ENCODE measurements at regions of chr7 and their contacts with region 1.

Region 1: DNA sequence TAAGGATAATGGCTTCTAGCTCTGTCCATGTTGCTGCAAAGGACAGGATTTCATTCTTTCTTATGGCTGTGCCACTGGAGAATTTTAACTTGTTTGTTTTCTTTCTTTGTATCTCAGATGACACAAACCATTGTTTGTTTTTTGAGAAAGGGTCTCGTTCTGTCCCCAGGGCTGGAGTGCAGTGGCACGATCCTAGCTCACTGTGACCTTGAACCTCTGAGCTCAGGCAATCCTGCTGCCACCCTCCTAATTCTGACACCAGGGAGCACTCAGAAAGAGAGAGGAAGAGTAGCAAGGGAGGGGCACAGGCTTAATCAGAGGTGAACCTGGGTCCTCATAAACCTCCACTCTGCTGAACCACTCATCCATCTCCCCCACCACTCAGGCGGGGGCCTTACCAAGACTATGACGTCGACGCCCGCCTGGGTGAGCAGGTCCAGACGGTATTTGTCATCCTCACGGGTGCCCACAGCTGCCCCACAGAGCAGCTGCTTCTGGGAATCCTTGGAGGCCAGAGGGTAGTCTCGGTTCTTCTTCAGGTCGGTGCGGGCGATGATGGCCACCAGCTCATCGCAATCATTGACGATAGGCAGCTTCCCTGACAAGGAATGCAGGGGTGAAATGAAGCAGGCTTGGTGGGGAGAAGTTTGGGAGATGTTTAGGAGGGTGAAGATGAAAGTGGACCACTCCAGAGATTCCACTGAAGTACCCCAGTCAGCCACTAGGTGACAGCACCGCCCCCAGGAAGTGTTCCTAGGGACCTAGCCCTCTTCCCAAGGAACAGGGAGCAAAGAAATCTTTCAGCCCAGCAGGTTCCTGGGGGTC is 11.6 kb downstream of the IMPDH1 start:
- DNase-seq: peak in 8 of 10 donors; percentile 62 to 75 (median 70)
- H3K4me3 ChIP-seq: no peak overlapping the region
- H3K27ac ChIP-seq: no peak overlapping the region
- H3K27me3 ChIP-seq: no peaks in the 10 kb centered on the region
- CTCF ChIP-seq: peak; percentile 65 to 97 (median 92)

Region 2: DNA sequence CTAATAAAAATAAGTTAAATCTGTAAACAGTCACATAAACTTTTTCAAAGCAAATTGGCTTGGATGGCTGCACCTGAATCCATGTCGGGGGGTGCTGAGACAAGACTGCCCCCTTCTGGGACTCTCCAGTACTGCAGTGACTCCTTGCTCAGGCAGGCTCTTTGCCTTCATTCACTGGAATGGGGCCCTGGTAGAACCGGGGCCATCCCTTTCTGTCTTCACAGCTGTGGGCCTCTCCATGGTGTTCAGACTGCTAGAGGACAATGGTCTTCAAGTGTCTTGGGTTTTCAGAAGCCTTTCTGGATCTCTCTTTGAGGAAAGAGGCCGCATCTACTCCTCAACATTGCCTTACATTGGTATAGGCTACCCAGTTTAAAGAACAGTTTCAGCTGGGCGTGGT is 27.6 kb after region 1 on chr7:
- intact Hi-C with region 1: loop called in 1 of 2 experiments (anchors 1 kb)
- DNase-seq: peak in 8 of 10 donors; percentile 28 to 85 (median 72)
- H3K4me3 ChIP-seq: no peak overlapping the region
- H3K27ac ChIP-seq: no peak overlapping the region
- H3K27me3 ChIP-seq: no peaks in the 10 kb centered on the region
- CTCF ChIP-seq: peak; percentile 64 to 96 (median 90)